ENCODE measurements at regions of chr2 and their contacts with region 1.

Region 1: DNA sequence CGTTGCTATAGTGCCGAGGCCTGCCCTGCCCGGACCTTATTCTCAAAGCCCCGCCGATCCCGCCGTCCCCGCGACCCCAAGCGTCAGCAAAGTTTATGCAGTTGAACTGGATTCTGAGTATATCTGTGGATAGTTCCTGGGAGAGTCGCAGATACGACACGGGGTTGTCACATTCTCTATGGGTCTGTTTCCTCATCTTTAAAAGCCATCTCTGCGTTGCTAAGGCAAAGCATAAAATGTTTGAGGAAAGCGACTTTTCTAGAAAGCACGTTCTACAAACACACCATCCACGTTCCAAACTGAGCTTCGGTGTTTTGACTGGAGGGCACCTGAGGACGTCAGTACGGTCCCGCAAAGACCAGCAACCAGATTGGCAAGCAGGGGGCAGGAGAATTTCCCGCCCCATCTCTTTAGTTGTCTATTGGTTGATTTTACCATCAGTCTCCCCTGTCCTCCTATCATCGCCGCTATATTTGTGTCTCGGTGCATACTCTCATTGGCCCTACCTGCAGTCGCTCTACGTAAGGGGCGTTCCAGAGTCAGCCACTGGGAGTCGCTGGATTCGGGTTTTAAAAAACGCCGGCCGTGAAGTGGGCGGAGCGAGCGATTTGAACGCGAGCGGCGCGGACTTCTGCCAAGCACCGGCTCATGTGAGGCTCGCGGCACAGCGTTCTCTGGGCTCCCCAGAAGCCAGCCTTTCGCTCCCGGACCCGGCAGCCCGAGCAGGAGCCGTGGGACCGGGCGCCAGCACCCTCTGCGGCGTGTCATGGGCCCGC is at the start of gene CENPA:
- DNase-seq: peak; percentile 94 to 99
- H3K4me3 ChIP-seq: peak within 1 kb of the TSS; percentile 82
- H3K27ac ChIP-seq: peak within 1 kb of the TSS; percentile 31; the same call in 1 of the 2 replicates
- H3K4me1 ChIP-seq: peaks cover 25% of the 10 kb centered on the region
- H3K27me3 ChIP-seq: no peaks in the 10 kb centered on the region
- CTCF ChIP-seq: peak; percentile 70
- total RNA-seq, gene CENPA: 43.6 and 48.8 TPM in 2 replicates

Region 2: DNA sequence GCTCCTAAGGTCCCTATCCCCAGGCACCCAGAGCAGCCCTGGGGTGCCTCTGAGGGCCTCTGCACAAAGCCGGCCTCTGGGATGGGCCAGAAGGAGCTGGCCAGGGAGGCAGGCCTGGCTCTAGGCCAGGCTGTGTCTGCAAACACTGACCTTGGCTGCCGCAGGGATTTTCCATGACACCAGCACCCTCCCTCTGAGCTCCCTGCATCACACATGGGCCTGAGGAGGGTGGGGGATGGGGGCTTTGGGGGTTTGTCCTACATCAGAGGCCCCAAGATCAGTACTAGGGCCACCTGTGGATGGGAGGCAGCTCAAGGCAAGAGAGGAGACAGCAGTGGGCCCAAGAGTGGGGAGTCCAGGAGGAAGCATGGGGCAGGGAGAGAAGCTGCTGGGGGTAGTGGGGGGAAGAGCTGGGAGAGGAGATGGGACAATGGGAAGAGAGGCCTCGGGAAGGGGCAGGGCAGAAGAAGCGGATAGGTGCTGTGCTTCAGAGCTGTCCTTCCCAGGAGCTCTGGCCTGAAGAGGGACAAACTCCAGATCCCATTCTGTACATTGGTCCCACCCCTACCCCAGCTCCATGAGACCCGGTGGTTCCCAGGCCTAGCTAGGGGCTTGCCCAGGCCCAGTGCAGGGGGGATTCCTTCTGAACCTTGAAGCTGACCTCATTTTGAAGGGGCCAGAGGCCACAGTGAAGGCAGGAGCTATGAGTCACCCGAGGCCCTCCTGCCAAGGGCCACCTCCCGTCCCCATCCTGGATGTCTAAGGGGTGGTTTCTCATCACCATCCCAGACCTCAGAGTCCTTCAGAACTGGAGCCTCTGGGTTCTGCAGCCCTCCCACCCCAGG is 65.1 kb before region 1 on chr2:
- CTCF ChIA-PET with region 1: no interaction called
- POLR2A ChIA-PET with region 1: no interaction called
- intact Hi-C with region 1: loop called (anchors 1 kb)
- DNase-seq: peak; percentile 53 to 60
- H3K4me3 ChIP-seq: no peak overlapping the region
- H3K27ac ChIP-seq: peak overlapping the region; percentile 47; the same call in 1 of the 2 replicates
- H3K4me1 ChIP-seq: peaks cover 59% of the 10 kb centered on the region
- H3K27me3 ChIP-seq: no peaks in the 10 kb centered on the region
- CTCF ChIP-seq: no peak

Region 3: GRCh38 chr2:26757873-26758789 is 27.5 kb before region 1 on chr2:
- CTCF ChIA-PET with region 1: interaction called, 4 read pairs
- POLR2A ChIA-PET with region 1: no interaction called
- intact Hi-C with region 1: loop called (anchors 2 kb)
- DNase-seq: peak; percentile 85 to 99
- H3K4me3 ChIP-seq: peak overlapping the region; percentile 21; the same call in 1 of the 2 replicates
- H3K27ac ChIP-seq: peak overlapping the region; percentile 98
- H3K4me1 ChIP-seq: peaks cover 54% of the 10 kb centered on the region
- H3K27me3 ChIP-seq: no peaks in the 10 kb centered on the region
- CTCF ChIP-seq: no peak

Region 4: GRCh38 chr2:26993768-26994167 is 208.1 kb after region 1 on chr2:
- CTCF ChIA-PET with region 1: no interaction called
- POLR2A ChIA-PET with region 1: no interaction called
- intact Hi-C with region 1: no loop called
- DNase-seq: no peak
- H3K4me3 ChIP-seq: no peak overlapping the region
- H3K27ac ChIP-seq: no peak overlapping the region
- H3K4me1 ChIP-seq: peaks cover 9% of the 10 kb centered on the region
- H3K27me3 ChIP-seq: no peaks in the 10 kb centered on the region
- CTCF ChIP-seq: no peak